Activated naive CD4-positive, alpha-beta T cell treated with anti-CD3 and anti-CD28 coated beads for 36 hours (primary cell): ENCODE measurements at regions of chr12 and their contacts with region 1.

Region 1: DNA sequence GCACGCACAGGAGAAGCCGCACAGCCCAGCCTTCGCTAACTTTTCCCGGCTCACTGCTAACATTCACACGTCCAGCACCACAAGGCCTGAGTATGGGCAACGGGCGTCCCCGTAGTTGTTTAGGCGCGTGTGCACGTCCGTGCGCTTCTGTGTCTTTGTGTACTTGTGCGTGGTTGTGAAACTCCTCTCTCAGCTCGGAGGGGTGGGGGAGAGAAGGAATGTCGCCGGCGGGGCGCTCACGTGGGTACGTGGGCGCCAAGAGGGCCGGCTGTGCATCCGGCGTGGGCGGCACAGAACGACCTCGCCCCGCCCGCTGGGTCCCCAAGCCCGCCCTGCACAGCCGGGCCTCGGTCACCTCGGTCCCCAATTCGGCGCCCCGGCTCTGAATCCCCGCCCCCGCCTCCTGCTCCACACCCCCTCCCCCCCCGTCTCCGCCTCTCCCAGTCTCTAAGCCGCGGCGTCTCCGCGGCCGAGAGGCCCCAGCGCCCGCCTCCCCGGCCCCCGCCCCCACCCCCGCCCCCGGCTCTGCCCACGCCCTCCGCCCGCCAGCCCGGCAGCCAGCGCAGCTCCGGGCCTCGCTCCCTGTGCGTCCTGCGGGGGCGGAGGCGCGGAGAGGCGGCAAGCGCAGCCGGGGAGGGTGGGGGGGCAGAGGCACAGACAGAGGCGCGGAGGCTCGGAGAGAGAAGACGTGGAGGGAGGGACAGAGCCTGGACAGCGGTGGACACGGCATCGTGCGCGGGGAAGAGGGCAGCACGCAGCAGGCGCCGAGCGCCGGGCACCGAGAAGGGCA is at the start of gene NAB2:
- DNase-seq: peak; percentile 92
- H3K4me3 Mint-ChIP-seq: peak within 1 kb of the TSS; percentile 91
- H3K27ac Mint-ChIP-seq: peak within 1 kb of the TSS; percentile 99
- H3K4me1 Mint-ChIP-seq: peaks cover 61% of the 10 kb centered on the region
- H3K27me3 Mint-ChIP-seq: no peaks in the 10 kb centered on the region
- total RNA-seq, gene NAB2: 18.4 to 19.1 TPM

Region 2: DNA sequence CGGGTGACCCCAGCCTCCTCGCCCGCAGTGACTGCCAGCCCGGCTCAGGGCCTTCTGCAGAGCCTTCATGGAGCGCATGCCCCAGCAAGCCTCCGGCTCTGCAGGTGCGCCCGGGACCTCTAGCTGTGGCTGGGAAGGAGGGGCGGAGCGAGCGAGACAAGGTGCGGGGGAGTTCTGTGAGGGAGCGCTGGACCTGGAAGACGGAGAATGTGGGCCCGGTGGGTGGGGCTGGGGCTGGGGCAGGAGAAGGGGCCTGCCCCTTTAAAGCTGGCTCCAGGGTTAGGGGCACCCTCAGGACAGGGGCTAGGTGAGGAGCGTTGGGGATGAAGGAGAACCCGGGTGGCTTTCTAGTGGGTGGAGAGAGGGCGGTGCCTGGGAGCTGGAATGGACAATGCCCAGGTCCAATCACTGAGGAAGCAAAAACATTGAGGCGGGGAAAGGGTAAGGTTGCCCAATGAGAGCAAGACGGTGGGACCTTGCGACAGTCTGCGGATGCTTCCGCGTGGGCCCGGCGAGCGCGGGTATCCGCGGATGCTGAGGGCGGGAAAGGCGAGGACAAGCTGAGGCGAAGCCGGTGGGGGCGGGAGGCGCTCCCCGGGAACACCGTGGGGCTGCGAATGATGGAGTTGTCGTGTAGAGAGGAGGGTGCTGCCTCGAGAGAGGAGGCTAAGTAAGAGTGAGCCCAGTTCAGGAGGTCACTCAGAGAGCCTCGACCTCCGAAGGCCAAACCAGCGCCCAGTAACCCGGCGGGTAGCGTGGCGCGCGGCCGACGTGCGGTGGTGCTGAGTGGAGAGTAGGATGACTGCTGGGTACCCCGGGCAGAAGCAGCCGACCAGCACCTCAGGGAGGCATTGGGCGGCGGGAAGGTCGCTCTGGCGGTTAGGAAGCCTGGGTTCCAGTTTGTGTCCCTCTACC is 600.4 kb before region 1 on chr12 and contains the start of gene GLS2:
- CTCF ChIA-PET with region 1: no interaction called
- intact Hi-C with region 1: no loop called
- DNase-seq: peak; percentile 79
- H3K4me3 Mint-ChIP-seq: peak within 1 kb of the TSS; percentile 84
- H3K27ac Mint-ChIP-seq: no peak within 1 kb of the TSS
- H3K4me1 Mint-ChIP-seq: peaks cover 16% of the 10 kb centered on the region
- H3K27me3 Mint-ChIP-seq: peaks cover 19% of the 10 kb centered on the region
- total RNA-seq, gene GLS2: 4.6 to 5.5 TPM

Region 3: GRCh38 chr12:56645717-56646446 is 442.8 kb before region 1 on chr12 and contains the start of gene ATP5F1B:
- CTCF ChIA-PET with region 1: no interaction called
- intact Hi-C with region 1: loop called (anchors 1 kb)
- DNase-seq: peak; percentile 97
- H3K4me3 Mint-ChIP-seq: peak within 1 kb of the TSS; percentile 96
- H3K27ac Mint-ChIP-seq: peak within 1 kb of the TSS; percentile 93
- H3K4me1 Mint-ChIP-seq: peaks cover 33% of the 10 kb centered on the region
- H3K27me3 Mint-ChIP-seq: no peaks in the 10 kb centered on the region
- total RNA-seq, gene ATP5F1B: 854 to 863 TPM

Region 4: DNA sequence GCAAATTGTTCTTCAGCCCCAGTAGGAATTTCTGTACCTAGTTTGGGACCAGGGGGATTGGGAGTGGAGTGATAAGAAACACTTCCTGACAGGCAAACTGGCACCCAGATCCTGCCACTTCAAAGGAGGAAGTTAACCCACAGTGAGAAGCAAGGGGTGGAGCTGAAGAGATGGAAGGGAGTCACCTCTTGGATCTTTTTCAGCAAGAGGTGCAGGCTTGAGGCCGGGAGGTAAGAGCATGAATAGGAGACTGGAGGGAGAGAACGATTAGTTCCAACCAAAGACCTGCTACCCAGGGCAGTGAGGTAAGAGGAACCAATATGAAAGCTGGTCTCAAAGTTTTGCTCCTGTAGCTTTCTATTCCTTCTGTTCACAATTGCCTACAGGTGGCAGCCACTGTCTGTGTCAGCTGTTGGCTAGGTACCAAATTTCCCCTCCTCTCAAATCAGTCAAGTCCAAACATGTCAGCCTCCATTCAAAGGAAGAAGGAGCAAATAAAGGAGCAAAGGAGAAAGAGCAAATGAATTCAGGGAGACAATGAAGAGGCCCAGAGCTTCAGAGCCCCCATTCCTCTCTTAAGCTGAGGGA is 57.4 kb before region 1 on chr12:
- CTCF ChIA-PET with region 1: interaction called, 13 read pairs
- intact Hi-C with region 1: no loop called
- DNase-seq: peak; percentile 64
- H3K4me3 Mint-ChIP-seq: peak overlapping the region; percentile 2
- H3K27ac Mint-ChIP-seq: peak overlapping the region; percentile 42
- H3K4me1 Mint-ChIP-seq: peaks cover 55% of the 10 kb centered on the region
- H3K27me3 Mint-ChIP-seq: no peaks in the 10 kb centered on the region

Region 5: GRCh38 chr12:57069523-57069922 is 19.1 kb before region 1 on chr12:
- CTCF ChIA-PET with region 1: interaction called, 292 read pairs
- intact Hi-C with region 1: loop called (anchors 1 kb)
- DNase-seq: peak; percentile 76
- H3K4me3 Mint-ChIP-seq: peak overlapping the region; percentile 23
- H3K27ac Mint-ChIP-seq: peak overlapping the region; percentile 93
- H3K4me1 Mint-ChIP-seq: peaks cover 71% of the 10 kb centered on the region
- H3K27me3 Mint-ChIP-seq: no peaks in the 10 kb centered on the region

Region 6: GRCh38 chr12:57148469-57149244 is 60.0 kb after region 1 on chr12:
- CTCF ChIA-PET with region 1: no interaction called
- intact Hi-C with region 1: no loop called
- DNase-seq: no peak
- H3K4me3 Mint-ChIP-seq: no peak overlapping the region
- H3K27ac Mint-ChIP-seq: no peak overlapping the region
- H3K4me1 Mint-ChIP-seq: no peaks in the 10 kb centered on the region
- H3K27me3 Mint-ChIP-seq: no peaks in the 10 kb centered on the region